ENCODE measurements at regions of chr19 and their contacts with region 1.

Region 1: DNA sequence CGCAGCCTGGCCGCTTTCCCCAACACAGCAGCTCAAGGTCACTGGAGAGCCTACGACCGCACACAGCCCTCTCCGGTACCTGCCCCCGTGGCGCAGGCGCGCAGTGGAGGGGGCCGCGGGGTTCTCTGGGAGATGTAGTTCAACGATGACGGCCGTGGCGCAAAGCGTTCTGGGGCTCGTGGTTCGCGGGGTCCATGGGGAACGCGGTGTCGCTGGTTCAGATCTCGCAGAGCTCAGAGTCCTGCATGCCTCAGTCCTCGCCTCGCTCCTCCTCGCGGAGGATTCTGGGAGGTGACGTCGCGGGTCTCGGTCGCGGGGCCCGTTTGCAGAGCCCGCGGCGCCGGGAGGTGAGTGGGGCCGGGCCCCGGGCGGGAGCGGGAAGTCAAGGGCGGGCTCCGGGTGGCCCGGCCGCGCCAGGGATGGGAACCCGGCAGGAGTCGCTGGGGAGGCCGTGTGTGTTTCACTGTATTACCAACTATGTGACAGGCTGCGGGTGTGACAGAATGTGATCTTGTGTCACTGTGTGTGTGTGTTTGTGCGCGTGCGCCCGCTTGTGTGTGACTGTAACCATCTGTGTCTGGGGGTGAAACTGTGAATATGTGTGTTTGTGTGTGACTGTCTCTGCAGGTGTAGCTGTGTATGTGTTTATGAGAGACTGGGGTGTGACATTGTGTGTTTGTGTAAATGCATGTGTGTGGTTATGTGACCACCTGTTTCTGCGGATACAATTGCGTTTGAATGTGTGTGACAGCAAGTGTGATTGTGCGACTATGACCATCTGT is at the start of gene ZNF527:
- DNase-seq: peak; percentile 95
- H3K4me3 Mint-ChIP-seq: peak within 1 kb of the TSS; percentile 84
- H3K27ac Mint-ChIP-seq: peak within 1 kb of the TSS; percentile 88
- H3K4me1 Mint-ChIP-seq: peaks cover 16% of the 10 kb centered on the region
- H3K27me3 Mint-ChIP-seq: no peaks in the 10 kb centered on the region
- CTCF ChIP-seq: no peak
- total RNA-seq, gene ZNF527: 4.3 and 5.0 TPM in 2 replicates

Region 2: DNA sequence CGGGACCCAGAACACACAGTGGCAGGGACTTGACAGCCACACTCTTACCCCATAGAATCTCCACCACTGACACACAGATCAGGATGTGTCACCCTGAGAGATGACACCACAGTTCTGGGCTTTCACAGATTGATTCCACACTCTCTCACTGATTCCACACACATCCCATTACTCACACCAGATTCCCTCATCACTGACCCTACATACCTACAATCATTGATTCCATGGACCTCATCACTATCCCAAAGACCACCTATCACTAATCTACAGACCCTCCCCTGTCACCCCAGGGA is 57.8 kb before region 1 on chr19:
- CTCF ChIA-PET with region 1: interaction called, 4 read pairs
- POLR2A ChIA-PET with region 1: interaction called, 17 read pairs
- intact Hi-C with region 1: no loop called
- DNase-seq: no peak
- H3K4me3 Mint-ChIP-seq: no peak overlapping the region
- H3K27ac Mint-ChIP-seq: no peak overlapping the region
- H3K4me1 Mint-ChIP-seq: no peaks in the 10 kb centered on the region
- H3K27me3 Mint-ChIP-seq: no peaks in the 10 kb centered on the region
- CTCF ChIP-seq: no peak

Region 3: DNA sequence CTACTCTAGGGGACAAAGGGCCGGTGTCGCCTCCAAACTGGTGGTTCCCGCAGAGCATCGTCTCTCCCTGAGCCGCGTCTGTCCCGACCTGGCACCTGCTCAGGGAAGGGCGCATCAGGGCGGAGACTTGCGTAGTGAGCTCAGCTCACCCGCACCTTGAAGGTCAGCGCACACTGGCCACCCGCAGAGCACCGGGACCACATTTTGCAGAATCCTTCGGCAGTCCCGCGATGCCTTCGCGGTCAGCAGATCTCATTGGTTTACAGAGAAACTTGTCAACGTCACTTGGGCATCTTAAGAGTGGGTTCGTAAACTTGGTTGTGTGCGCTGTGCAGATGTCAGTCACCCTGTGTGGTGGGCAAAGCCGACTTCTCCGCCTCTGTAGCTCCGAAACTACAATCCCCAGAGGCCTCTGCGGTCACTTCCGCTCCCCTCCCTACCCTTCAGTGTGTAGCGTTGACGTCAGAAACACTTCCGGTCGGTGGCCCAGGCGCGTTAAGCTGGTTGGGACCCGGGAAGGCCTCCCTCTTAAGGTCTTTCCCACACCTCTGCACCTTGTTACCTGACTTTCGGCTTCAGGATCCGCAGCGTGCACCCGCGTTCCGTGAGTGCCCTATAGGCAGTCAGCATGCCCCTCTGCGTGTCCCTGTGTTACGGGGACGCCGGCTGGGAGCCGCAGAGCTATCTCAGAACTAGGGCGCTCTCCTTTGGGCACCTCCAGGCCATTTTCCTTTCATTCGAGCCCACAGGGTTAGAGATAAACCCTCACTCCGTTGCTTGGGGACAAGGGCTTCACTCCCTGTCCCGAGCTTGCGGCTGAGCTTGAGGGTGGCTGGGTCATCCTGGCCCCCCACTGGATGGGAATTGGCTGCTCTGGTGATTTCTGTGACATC is 36.6 kb before region 1 on chr19:
- CTCF ChIA-PET with region 1: no interaction called
- POLR2A ChIA-PET with region 1: interaction called, 17 read pairs
- intact Hi-C with region 1: no loop called
- DNase-seq: peak; percentile 67
- H3K4me3 Mint-ChIP-seq: peak overlapping the region; percentile 84
- H3K27ac Mint-ChIP-seq: peak overlapping the region; percentile 79
- H3K4me1 Mint-ChIP-seq: no peaks in the 10 kb centered on the region
- H3K27me3 Mint-ChIP-seq: no peaks in the 10 kb centered on the region
- CTCF ChIP-seq: no peak

Region 4: DNA sequence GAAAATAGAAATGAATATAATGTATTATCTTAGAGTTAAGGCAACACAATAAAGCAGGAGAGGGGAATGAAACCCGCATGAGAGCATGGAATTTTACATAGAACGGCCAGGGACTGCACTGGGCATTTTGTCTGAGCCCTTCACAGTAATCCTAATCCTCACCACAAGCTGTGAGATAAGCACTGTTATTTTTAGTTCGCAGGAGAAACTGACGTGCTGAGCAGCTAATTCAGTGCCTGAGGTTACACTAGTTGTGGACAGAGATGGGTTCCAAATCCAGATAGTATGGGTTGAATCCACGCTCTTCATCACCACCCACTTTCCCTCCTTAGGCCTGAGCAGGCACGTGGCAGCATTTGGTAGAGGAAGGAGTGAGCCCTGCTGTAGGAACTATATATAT is 25.0 kb before region 1 on chr19:
- CTCF ChIA-PET with region 1: no interaction called
- POLR2A ChIA-PET with region 1: no interaction called
- intact Hi-C with region 1: no loop called
- DNase-seq: no peak
- H3K4me3 Mint-ChIP-seq: no peak overlapping the region
- H3K27ac Mint-ChIP-seq: no peak overlapping the region
- H3K4me1 Mint-ChIP-seq: no peaks in the 10 kb centered on the region
- H3K27me3 Mint-ChIP-seq: no peaks in the 10 kb centered on the region
- CTCF ChIP-seq: no peak

Region 5: GRCh38 chr19:37519890-37520289 is 148.8 kb after region 1 on chr19:
- CTCF ChIA-PET with region 1: no interaction called
- POLR2A ChIA-PET with region 1: no interaction called
- intact Hi-C with region 1: no loop called
- DNase-seq: no peak
- H3K4me3 Mint-ChIP-seq: no peak overlapping the region
- H3K27ac Mint-ChIP-seq: no peak overlapping the region
- H3K4me1 Mint-ChIP-seq: no peaks in the 10 kb centered on the region
- H3K27me3 Mint-ChIP-seq: no peaks in the 10 kb centered on the region
- CTCF ChIP-seq: no peak

Region 6: DNA sequence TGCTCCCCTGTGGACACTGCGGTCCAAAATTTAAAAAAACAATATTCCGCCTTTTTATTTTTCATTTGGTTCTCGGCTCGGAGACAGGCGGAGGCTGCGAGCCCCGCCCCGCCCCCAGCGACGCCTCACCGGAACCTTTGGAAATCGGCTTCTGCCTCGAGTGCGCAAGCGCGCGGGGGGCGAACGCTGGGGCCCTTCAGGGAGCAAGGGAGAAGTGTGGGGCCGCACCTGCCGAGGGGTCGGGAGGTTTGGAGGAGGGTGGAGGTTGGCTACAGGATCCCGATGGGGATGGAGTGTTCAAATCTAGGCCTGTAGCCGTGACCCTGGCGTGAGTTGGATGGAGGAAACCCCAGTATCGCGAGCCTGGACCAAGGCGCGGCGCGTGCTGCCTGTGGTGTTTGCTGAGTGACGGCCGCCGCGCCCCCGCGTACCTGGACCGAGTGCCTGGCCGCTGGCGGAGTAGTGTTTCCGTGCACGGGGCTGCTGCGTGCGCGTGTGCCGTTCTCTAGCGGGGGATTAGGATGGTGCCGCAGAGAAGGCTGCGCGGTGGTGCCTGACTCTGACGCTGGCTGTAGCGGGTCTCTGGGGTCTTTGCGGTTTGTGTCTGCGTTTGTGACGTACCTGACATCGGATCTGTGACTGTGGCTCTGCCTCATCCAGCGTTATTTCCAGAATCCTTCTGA is 284.8 kb after region 1 on chr19:
- CTCF ChIA-PET with region 1: no interaction called
- POLR2A ChIA-PET with region 1: interaction called, 16 read pairs
- intact Hi-C with region 1: no loop called
- DNase-seq: peak; percentile 87
- H3K4me3 Mint-ChIP-seq: peak overlapping the region; percentile 89
- H3K27ac Mint-ChIP-seq: peak overlapping the region; percentile 91
- H3K4me1 Mint-ChIP-seq: peaks cover 9% of the 10 kb centered on the region
- H3K27me3 Mint-ChIP-seq: no peaks in the 10 kb centered on the region
- CTCF ChIP-seq: no peak

Measured in MCF 10A (cell line).